Breast epithelium (tissue), 4 donors: ENCODE measurements at regions of chr16 and their contacts with region 1.

Region 1: DNA sequence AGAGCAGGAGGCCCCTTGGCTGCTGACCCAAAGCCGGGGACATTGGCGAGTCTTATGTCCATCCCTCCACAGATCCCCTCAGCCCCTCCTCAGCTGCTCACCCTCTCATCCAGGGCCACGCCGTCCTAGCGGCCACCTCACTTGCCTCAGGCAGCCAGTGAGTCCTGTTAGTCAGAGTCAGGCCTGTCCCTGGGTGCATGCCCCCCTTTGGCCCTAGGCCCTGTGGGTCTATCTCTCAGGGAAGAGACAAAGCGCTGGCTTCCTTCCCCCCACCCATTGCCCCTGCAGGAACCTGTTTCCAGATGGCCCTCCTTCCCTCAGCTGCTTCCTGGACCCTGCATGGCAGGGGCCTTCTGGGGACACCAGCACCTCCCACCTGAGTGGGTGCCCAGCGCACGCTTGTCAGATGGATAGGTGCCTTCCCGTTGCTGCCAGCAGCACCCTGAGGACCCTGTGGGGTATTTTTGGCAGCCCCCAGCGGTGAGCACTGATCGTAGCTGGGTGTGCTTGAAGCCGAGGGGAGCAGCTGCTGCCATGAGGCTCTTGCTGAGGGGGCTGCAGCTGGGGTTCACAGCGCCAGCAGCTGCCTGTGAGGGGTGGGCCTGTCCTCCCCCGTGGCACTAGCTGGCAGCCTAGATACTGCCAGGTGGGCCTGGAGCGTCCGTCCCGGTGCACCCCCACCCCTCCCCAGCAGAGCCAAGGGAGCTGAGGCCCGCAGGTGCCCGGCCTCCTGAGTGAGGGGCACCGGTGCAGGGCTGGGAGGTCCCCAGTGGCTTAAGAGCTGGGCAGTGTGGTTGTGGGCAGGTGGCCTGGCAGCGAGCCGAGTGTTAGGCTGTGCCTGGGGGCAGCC is 8.4 kb downstream of the DBNDD1 start:
- DNase-seq: no peak
- H3K4me3 ChIP-seq: no peak overlapping the region
- H3K27ac ChIP-seq: no peak overlapping the region
- H3K4me1 ChIP-seq: no peaks in the 10 kb centered on the region
- H3K27me3 ChIP-seq: no peaks in the 10 kb centered on the region
- CTCF ChIP-seq: no peak
- POLR2A ChIP-seq: no peak

Region 2: DNA sequence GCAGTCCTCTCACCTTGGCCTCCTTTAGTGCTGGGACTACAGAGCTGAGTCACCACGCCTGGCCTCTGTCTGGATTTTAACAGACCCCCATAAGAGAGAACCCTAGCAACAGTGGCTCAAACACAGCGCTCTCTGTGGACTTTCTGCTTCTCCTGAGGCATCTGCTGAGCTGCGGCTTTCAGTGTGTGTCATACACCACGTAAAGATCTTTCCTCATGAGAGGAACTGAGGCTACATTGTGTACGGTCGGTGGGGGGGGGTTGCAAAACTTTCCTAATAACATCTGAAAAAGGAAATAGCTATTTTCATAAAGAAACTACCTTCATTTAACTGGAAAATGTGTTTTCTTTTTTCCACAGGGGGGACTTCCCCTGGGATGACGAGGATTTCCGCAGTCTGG is 29.5 kb before region 1 on chr16:
- intact Hi-C with region 1: loop called (anchors 2 kb)
- DNase-seq: no peak
- H3K4me3 ChIP-seq: no peak overlapping the region
- H3K27ac ChIP-seq: no peak overlapping the region
- H3K4me1 ChIP-seq: no peaks in the 10 kb centered on the region
- H3K27me3 ChIP-seq: no peaks in the 10 kb centered on the region
- CTCF ChIP-seq: no peak
- POLR2A ChIP-seq: no peak